ENCODE measurements at regions of chr12 and their contacts with region 1.

Region 1: DNA sequence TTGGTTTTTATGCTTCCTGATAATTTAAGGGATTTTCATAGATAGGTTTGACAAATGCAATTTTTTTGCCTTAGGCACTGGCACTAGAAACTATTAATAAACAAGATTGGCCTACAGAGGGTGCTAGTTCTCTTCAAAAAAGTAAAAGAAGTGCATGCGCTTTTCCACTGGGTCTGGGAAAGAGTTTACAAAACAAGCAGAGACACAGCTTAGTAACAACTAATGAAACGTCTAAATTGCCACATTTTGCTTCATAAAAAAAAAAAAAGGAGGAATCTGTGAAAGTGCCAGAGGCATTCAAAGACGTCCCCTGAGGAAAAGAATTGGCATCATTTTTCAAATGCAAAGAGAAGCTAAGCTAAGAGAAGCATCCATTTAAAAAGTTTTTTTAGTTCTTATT is 58.3 kb upstream of the EEA1 start:
- DNase-seq: peak; percentile 49
- H3K4me3 Mint-ChIP-seq: no peak overlapping the region
- H3K27ac Mint-ChIP-seq: peak overlapping the region; percentile 63
- H3K4me1 Mint-ChIP-seq: peaks cover 13% of the 10 kb centered on the region
- H3K27me3 Mint-ChIP-seq: no peaks in the 10 kb centered on the region

Region 2: DNA sequence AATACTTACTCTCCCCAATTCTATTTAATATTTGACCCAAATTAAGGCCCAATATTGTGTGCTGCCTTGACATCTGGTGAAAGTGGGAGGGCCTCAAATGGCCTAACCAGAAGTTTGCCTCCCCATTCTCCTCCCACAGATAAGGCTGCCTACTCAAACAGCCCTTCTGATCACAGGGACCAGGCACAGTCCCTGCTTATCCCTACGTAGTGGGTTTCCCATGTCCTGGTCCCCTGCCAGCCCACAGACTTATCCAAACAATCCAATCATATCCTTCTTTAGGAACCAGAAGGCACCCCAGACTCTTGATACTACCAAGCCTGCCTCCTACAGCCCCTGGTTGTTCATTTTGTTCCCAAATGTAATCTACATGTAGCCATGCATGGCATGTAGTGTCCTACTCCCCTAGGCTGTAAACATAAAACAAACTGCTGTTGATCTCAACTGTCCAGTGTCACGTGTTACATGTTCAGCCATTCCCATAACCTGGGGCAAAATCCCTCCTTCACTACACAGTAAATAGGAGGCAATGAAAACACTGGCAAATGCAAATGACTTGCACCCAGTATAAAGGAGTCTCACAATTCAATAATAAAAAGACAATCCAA is 107.6 kb before region 1 on chr12:
- CTCF ChIA-PET with region 1: no interaction called
- POLR2A ChIA-PET with region 1: no interaction called
- DNase-seq: no peak
- H3K4me3 Mint-ChIP-seq: no peak overlapping the region
- H3K27ac Mint-ChIP-seq: no peak overlapping the region
- H3K4me1 Mint-ChIP-seq: peaks cover 3% of the 10 kb centered on the region
- H3K27me3 Mint-ChIP-seq: no peaks in the 10 kb centered on the region

Region 3: GRCh38 chr12:92977326-92977725 is 10.0 kb before region 1 on chr12:
- CTCF ChIA-PET with region 1: interaction called, 17 read pairs
- POLR2A ChIA-PET with region 1: no interaction called
- DNase-seq: peak; percentile 12
- H3K4me3 Mint-ChIP-seq: no peak overlapping the region
- H3K27ac Mint-ChIP-seq: peak overlapping the region; percentile 37
- H3K4me1 Mint-ChIP-seq: peaks cover 15% of the 10 kb centered on the region
- H3K27me3 Mint-ChIP-seq: no peaks in the 10 kb centered on the region

Region 4: GRCh38 chr12:93015871-93016751 is 28.7 kb after region 1 on chr12:
- CTCF ChIA-PET with region 1: interaction called, 10 read pairs
- POLR2A ChIA-PET with region 1: no interaction called
- DNase-seq: no peak
- H3K4me3 Mint-ChIP-seq: no peak overlapping the region
- H3K27ac Mint-ChIP-seq: no peak overlapping the region
- H3K4me1 Mint-ChIP-seq: no peaks in the 10 kb centered on the region
- H3K27me3 Mint-ChIP-seq: no peaks in the 10 kb centered on the region

Region 5: GRCh38 chr12:93032758-93033157 is 45.4 kb after region 1 on chr12:
- CTCF ChIA-PET with region 1: no interaction called
- POLR2A ChIA-PET with region 1: no interaction called
- DNase-seq: no peak
- H3K4me3 Mint-ChIP-seq: no peak overlapping the region
- H3K27ac Mint-ChIP-seq: no peak overlapping the region
- H3K4me1 Mint-ChIP-seq: no peaks in the 10 kb centered on the region
- H3K27me3 Mint-ChIP-seq: peaks cover 6% of the 10 kb centered on the region

Region 6: DNA sequence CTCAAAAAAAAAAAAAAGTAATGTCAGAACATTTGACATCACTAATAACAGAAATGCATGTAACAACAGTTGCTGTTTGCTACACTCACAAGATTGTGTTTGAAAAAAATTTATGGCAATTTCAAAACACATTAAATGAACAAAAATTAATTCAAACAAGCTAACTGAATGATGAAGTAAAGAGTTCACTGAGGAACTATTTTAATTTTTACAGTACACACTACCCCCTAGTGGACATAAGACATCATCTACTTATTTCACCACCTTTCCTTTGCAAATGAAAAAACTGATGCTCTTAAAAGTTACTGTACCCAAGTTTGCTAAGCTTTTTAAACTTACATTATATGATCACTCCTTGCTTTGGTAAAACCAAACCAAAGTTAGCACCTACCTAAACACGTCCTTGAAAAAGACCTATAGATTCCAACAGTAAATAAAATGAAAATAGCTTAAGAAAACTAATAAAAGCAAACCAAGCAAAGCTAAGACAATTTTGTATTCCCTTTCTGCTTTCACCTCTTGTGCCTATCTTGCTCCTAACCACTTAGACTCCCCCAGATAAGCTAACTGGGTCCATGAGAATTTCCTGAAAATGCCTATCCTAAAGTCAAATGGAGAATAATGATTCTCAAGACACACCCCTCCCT is 432.1 kb after region 1 on chr12:
- CTCF ChIA-PET with region 1: interaction called, 10 read pairs
- POLR2A ChIA-PET with region 1: no interaction called
- DNase-seq: no peak
- H3K4me3 Mint-ChIP-seq: no peak overlapping the region
- H3K27ac Mint-ChIP-seq: no peak overlapping the region
- H3K4me1 Mint-ChIP-seq: peaks cover 77% of the 10 kb centered on the region
- H3K27me3 Mint-ChIP-seq: no peaks in the 10 kb centered on the region